ENCODE measurements at regions of chr1 and their contacts with region 1.

Region 1: GRCh38 chr1:101309334-101310311 is 72.8 kb downstream of the S1PR1 start:
- DNase-seq: peak; percentile 82
- ATAC-seq: peak; percentile 72

Region 2: GRCh38 chr1:101043776-101044175 is 265.8 kb before region 1 on chr1:
- intact Hi-C with region 1: no loop called
- DNase-seq: no peak
- ATAC-seq: peak; percentile 57

Region 3: DNA sequence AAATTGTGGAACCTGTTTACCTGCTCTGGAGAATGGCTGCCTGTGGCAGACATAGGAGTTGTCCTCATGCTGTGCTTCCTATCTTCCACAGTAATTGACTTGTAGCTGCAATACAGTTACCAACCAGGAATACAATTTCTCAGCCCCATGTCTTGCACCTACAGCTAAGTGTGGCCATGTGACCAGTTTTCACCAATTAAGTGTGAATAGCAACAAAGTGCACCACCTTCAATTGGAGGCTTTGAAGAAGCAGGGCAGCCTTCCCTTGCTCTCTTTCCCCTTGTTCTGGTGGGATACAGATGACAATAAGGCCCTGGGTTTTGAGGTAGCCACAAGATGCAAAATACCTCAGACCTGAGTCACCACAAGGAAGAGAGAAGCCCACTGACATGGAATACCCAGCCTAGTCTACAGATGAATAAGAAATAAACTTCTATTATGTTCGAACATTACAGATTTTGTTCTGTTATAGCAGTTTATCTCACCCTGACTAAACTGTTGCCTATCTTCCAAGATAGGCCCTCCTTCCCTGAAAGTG is 143.0 kb before region 1 on chr1:
- intact Hi-C with region 1: no loop called
- DNase-seq: no peak
- ATAC-seq: no peak

Region 4: DNA sequence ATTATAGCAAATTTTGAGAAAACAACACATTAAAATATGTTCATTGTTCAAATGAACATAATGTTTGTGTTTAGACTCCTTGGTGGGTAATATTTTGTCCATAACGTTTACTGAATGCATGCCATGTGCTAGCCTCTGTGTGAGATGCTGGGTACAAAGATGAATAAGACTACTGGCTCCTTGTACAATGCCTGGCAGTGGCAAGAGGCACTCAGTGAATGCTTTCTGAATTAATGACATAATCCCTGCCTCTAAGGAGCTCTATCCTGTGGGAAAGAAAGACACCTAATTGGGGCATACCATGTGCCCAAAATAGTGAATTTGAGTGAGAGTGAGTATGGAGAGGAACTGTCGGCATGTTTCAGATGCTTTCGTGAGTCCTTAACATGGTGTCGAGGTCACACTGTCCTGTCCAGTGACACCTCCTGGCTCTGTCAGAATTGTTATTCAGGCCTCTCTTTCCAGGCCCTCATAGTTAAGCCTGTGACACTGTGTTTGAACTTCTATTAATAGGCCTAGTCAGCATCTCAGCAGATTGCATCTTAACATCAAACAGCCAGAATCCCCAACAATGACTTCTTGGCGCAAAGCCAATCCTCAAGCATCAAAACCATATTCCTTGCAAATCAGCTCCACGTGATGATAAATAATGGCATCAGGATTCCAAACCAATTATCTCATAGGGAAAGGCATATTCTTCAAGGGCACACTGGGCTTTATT is 105.6 kb before region 1 on chr1:
- intact Hi-C with region 1: no loop called
- DNase-seq: no peak
- ATAC-seq: peak; percentile 95

Region 5: GRCh38 chr1:101357444-101357986 is 47.9 kb after region 1 on chr1:
- intact Hi-C with region 1: loop called (anchors 1 kb)
- DNase-seq: no peak
- ATAC-seq: peak; percentile 89

Region 6: GRCh38 chr1:101438359-101438758 is 128.7 kb after region 1 on chr1:
- intact Hi-C with region 1: loop called (anchors 5 kb)
- DNase-seq: no peak
- ATAC-seq: peak; percentile 44

Region 7: DNA sequence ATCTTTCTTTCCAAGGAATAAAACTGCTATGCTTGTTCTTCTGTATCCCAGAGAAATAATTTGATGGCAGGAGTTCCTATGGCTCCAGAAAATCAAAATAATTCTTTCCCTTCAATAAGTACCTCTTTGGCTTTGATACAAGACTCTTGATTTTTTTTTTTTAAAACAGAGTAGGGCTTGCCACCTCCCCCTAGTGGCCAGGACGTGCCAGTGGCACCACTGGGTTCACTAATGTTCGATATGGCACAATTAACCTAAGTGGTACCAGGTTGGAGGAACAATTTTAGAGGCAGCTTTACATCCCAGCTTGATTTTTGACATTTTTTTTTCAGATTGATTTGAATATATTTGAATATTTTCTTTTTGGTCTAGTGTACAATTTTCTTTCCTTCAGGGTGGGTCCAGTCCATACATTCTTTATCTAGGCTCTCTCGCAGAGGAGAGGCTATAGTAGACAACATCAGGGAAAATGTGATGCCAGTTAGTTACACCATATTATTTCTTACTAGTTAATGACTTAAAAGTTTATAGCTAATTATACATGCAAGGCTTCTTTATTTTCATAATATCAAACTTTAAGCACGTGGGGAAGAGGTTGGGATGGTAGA is 258.1 kb after region 1 on chr1:
- intact Hi-C with region 1: loop called (anchors 5 kb)
- DNase-seq: no peak
- ATAC-seq: no peak

Measured in Right ventricle myocardium inferior (tissue), 1 donor.